Tibial artery (tissue), 4 donors: ENCODE measurements at regions of chr19 and their contacts with region 1.

Region 1: DNA sequence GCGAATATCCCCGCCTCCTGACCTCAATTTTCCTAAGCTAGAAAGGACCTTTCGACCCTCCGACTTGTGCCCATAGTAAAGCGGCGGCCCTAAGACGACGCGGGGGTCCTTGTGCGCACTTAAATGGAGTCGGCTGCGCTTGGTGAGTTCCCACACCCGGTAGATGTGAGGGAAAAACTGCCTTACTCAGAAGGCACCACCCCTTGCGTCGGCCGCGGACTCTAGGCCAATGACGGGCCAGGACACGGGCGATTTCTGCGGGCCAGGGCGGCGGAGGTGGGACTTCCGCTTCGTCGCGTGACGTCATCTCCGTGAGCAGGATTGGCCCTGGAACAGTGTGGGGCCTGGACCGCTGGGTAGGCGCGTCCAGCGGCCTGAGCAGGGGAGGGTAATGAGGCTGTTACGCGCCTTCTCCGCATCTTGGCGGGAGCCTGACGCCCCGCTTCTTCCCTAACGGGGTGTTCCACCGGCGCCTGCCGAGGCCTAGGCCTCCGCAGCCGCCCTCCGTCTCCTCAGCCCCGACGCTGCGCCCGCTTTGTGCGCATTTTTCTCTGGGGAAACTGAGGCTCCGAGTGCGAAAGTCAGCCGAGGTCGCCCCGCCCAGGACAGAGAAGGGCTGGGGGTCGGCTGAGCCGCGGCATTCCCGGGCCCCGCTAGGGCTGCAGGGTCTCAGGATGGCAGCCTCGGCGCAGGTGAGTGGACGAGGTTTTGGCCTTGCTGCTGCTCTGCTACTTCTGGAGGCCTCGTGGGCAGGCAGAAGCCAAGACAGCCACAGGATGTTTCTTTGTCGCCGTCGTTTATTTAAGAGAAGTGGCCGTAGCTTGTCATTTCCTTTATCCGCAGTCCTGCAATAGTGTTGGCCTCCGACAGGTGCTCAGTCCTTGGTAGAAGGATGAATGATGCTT is at the start of gene ZNF543:
- DNase-seq: peak; percentile 93 to 97
- H3K4me3 ChIP-seq: peak within 1 kb of the TSS; percentile 93 to 94
- H3K27ac ChIP-seq: peak within 1 kb of the TSS; percentile 87 to 95
- H3K4me1 ChIP-seq: peaks cover 0 to 18% (median 13%) of the 10 kb centered on the region in 4 donors
- H3K27me3 ChIP-seq: peaks cover 0 to 9% of the 10 kb centered on the region in 2 donors
- CTCF ChIP-seq: no peak

Region 2: DNA sequence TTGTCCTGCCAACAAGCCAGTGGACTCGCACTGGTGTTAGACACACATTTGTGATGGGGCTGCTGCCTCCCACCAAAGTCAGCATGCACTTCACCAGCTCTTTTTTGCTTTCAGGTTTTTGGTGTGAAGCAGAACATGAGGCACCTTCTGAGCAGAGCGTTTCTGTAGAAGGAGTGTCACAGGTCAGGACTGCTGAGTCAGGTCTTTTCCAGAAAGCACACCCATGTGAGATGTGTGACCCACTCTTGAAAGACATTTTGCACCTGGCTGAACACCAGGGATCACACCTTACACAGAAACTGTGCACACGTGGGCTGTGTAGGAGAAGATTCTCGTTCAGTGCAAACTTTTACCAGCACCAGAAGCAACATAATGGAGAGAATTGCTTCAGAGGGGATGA is 35.5 kb after region 1 on chr19:
- intact Hi-C with region 1: loop called (anchors 5 kb)
- DNase-seq: no peak
- H3K4me3 ChIP-seq: no peak overlapping the region
- H3K27ac ChIP-seq: no peak overlapping the region
- H3K4me1 ChIP-seq: peaks cover 5 to 22% (median 9%) of the 10 kb centered on the region in 4 donors
- H3K27me3 ChIP-seq: no peaks in the 10 kb centered on the region
- CTCF ChIP-seq: no peak